A673 (cell line): ENCODE measurements at regions of chr7 and their contacts with region 1.

Region 1: DNA sequence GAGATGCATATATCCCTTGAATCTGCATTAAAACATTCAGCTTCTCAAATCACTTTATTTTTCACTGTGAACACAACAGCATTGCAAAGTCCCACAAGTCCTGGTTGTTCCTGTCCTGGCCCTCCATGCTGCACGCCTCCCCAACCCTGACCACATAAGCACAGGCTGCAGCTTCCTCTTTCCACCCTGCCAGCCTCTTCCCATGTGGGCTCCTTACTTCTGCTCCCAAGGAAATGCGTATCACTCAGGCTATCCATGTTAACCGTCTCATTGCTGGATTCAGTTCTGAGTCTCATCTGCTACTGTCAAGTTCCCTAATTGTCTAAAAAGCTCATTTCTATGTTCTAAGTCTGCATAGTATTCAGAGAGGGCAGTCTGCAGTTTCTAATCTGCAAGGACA is 89.7 kb upstream of the ZPBP start:
- DNase-seq: no peak
- H3K4me3 ChIP-seq: no peak overlapping the region
- H3K27ac ChIP-seq: no peak overlapping the region
- H3K4me1 ChIP-seq: no peaks in the 10 kb centered on the region
- H3K27me3 ChIP-seq: peaks cover 9% of the 10 kb centered on the region
- CTCF ChIP-seq: no peak

Region 2: GRCh38 chr7:50037086-50037485 is 145.7 kb before region 1 on chr7:
- CTCF ChIA-PET with region 1: no interaction called
- POLR2A ChIA-PET with region 1: no interaction called
- intact Hi-C with region 1: no loop called
- DNase-seq: no peak
- H3K4me3 ChIP-seq: no peak overlapping the region
- H3K27ac ChIP-seq: no peak overlapping the region
- H3K4me1 ChIP-seq: no peaks in the 10 kb centered on the region
- H3K27me3 ChIP-seq: no peaks in the 10 kb centered on the region
- CTCF ChIP-seq: no peak

Region 3: GRCh38 chr7:50166997-50167965 is 15.5 kb before region 1 on chr7:
- CTCF ChIA-PET with region 1: no interaction called
- POLR2A ChIA-PET with region 1: no interaction called
- intact Hi-C with region 1: no loop called
- DNase-seq: no peak
- H3K4me3 ChIP-seq: no peak overlapping the region
- H3K27ac ChIP-seq: no peak overlapping the region
- H3K4me1 ChIP-seq: no peaks in the 10 kb centered on the region
- H3K27me3 ChIP-seq: peaks cover 12% of the 10 kb centered on the region
- CTCF ChIP-seq: no peak

Region 4: DNA sequence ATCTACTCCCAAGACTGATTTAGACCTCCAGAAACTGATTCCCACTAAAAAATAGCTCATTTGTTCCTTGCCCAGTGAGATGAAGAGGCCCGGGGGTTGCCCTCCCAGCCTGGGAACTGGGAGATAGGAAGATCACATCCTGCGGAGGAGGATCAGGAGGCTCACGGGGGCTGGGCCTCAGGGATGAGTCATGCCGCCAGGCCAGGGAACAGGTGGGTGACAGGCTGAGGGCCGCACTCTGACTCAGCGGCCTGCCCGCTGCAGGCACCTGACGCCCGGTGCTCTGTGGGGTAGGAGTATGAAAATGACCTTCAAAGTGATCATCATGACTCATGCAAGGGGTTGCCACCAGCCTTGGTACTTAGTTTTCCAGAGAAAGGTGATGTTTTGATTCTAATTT is 14.8 kb after region 1 on chr7:
- CTCF ChIA-PET with region 1: no interaction called
- POLR2A ChIA-PET with region 1: interaction called, 12 read pairs
- intact Hi-C with region 1: no loop called
- DNase-seq: no peak
- H3K4me3 ChIP-seq: no peak overlapping the region
- H3K27ac ChIP-seq: no peak overlapping the region
- H3K4me1 ChIP-seq: no peaks in the 10 kb centered on the region
- H3K27me3 ChIP-seq: peaks cover 23% of the 10 kb centered on the region
- CTCF ChIP-seq: no peak

Region 5: GRCh38 chr7:51455948-51456347 is 1273.2 kb after region 1 on chr7:
- CTCF ChIA-PET with region 1: no interaction called
- POLR2A ChIA-PET with region 1: no interaction called
- intact Hi-C with region 1: no loop called
- DNase-seq: no peak
- H3K4me3 ChIP-seq: no peak overlapping the region
- H3K27ac ChIP-seq: no peak overlapping the region
- H3K4me1 ChIP-seq: no peaks in the 10 kb centered on the region
- H3K27me3 ChIP-seq: no peaks in the 10 kb centered on the region
- CTCF ChIP-seq: no peak